Naive thymus-derived CD4-positive, alpha-beta T cell (primary cell): ENCODE measurements at regions of chr11 and their contacts with region 1.

Region 1: GRCh38 chr11:34174412-34175041 is 69.1 kb downstream of the NAT10 start:
- DNase-seq: peak; percentile 60 to 83 (median 73)
- ATAC-seq: peak; percentile 99
- H3K4me3 ChIP-seq: no peak overlapping the region
- H3K4me3 Mint-ChIP-seq: peak overlapping the region; percentile 21 to 81 (median 67)
- H3K27ac ChIP-seq: no peak overlapping the region
- H3K27ac Mint-ChIP-seq: no peak overlapping the region
- H3K4me1 ChIP-seq: peaks cover 0 to 4% of the 10 kb centered on the region in 2 donors
- H3K4me1 Mint-ChIP-seq: peaks cover 0 to 21% (median 4%) of the 10 kb centered on the region in 7 donors
- H3K27me3 ChIP-seq: no peaks in the 10 kb centered on the region
- H3K27me3 Mint-ChIP-seq: peaks cover 0 to 6% (median 0%) of the 10 kb centered on the region in 5 donors

Region 2: GRCh38 chr11:33642461-33643166 is 531.9 kb before region 1 on chr11:
- CTCF ChIA-PET with region 1: no interaction called
- POLR2A ChIA-PET with region 1: no interaction called
- intact Hi-C with region 1: no loop called
- DNase-seq: no peak
- ATAC-seq: no peak
- H3K4me3 ChIP-seq: no peak overlapping the region
- H3K4me3 Mint-ChIP-seq: no peak overlapping the region
- H3K27ac ChIP-seq: no peak overlapping the region
- H3K27ac Mint-ChIP-seq: no peak overlapping the region
- H3K4me1 ChIP-seq: no peaks in the 10 kb centered on the region
- H3K4me1 Mint-ChIP-seq: no peaks in the 10 kb centered on the region
- H3K27me3 ChIP-seq: no peaks in the 10 kb centered on the region
- H3K27me3 Mint-ChIP-seq: peaks cover 4 to 45% (median 20%) of the 10 kb centered on the region in 5 donors

Region 3: GRCh38 chr11:33808228-33808828 is 366.2 kb before region 1 on chr11:
- CTCF ChIA-PET with region 1: no interaction called
- POLR2A ChIA-PET with region 1: no interaction called
- intact Hi-C with region 1: loop called in 1 of 2 experiments (anchors 1 kb)
- DNase-seq: peak; percentile 60 to 85 (median 69)
- ATAC-seq: peak; percentile 94
- H3K4me3 ChIP-seq: no peak overlapping the region
- H3K4me3 Mint-ChIP-seq: no peak overlapping the region
- H3K27ac ChIP-seq: no peak overlapping the region
- H3K27ac Mint-ChIP-seq: no peak overlapping the region
- H3K4me1 ChIP-seq: no peaks in the 10 kb centered on the region
- H3K4me1 Mint-ChIP-seq: peaks cover 0 to 4% (median 0%) of the 10 kb centered on the region in 7 donors
- H3K27me3 ChIP-seq: no peaks in the 10 kb centered on the region
- H3K27me3 Mint-ChIP-seq: peaks cover 9 to 39% (median 13%) of the 10 kb centered on the region in 5 donors

Region 4: DNA sequence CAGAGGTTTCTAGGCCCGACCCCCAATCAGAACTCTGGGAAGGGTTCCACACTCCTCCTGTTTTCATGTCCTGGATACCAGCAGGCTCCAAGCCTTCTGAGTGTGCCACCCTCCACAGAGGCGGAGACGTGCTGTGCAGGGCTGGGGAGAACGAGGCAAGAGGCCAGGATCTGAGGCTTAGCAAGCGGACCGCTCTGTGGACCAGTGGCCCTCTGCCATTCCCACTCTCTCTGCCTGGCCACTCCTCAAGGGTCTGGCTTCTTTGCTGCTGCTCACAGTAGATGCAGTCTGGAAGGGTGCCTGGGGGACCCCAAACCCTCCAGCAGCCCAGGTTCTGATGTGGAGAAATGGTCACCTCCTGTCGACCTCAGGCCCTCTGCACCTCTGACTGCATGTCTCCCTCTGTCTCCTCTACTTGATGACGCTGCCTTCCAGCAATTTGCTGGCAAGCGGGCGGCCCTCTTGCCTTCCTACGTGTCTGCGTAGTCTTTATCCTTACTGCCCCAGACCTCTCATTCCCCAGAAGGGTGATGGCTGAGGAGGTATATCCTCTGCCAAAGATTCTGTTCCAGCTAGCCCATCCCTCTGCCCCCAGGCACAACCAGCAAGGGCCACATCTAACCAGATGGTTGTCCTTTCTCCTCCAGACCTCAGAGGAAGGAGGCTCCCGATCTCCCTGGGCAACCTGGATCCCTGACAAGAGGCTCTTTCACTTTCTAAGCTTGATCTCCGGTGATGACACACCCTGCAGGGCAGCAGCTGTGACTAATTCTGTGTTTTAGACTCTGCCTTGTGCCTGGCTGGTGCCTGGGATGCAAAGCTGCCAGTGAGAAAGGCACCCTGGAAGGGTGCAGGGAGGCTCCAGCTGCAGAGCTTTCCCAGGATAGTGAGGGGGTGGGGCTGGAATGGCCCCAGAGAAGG is 18.2 kb after region 1 on chr11:
- CTCF ChIA-PET with region 1: no interaction called
- POLR2A ChIA-PET with region 1: no interaction called
- intact Hi-C with region 1: no loop called
- DNase-seq: no peak
- ATAC-seq: no peak
- H3K4me3 ChIP-seq: no peak overlapping the region
- H3K4me3 Mint-ChIP-seq: no peak overlapping the region
- H3K27ac ChIP-seq: no peak overlapping the region
- H3K27ac Mint-ChIP-seq: peak overlapping the region in 1 of 9 donors; percentile 35
- H3K4me1 ChIP-seq: no peaks in the 10 kb centered on the region
- H3K4me1 Mint-ChIP-seq: peaks cover 0 to 22% (median 3%) of the 10 kb centered on the region in 7 donors
- H3K27me3 ChIP-seq: no peaks in the 10 kb centered on the region
- H3K27me3 Mint-ChIP-seq: peaks cover 0 to 6% (median 0%) of the 10 kb centered on the region in 5 donors

Region 5: GRCh38 chr11:34204396-34205279 is 30.1 kb after region 1 on chr11:
- CTCF ChIA-PET with region 1: no interaction called
- POLR2A ChIA-PET with region 1: no interaction called
- intact Hi-C with region 1: no loop called
- DNase-seq: no peak
- ATAC-seq: no peak
- H3K4me3 ChIP-seq: no peak overlapping the region
- H3K4me3 Mint-ChIP-seq: no peak overlapping the region
- H3K27ac ChIP-seq: no peak overlapping the region
- H3K27ac Mint-ChIP-seq: no peak overlapping the region
- H3K4me1 ChIP-seq: peaks cover 0 to 8% of the 10 kb centered on the region in 2 donors
- H3K4me1 Mint-ChIP-seq: peaks cover 6 to 41% (median 16%) of the 10 kb centered on the region in 7 donors
- H3K27me3 ChIP-seq: no peaks in the 10 kb centered on the region
- H3K27me3 Mint-ChIP-seq: no peaks in the 10 kb centered on the region

Region 6: GRCh38 chr11:34250732-34251639 is 76.5 kb after region 1 on chr11:
- CTCF ChIA-PET with region 1: interaction called, 13 read pairs
- POLR2A ChIA-PET with region 1: no interaction called
- intact Hi-C with region 1: loop called (anchors 1 to 2 kb)
- DNase-seq: peak; percentile 24 to 79 (median 58)
- ATAC-seq: peak; percentile 94
- H3K4me3 ChIP-seq: peak overlapping the region; percentile 40
- H3K4me3 Mint-ChIP-seq: peak overlapping the region; percentile 35 to 85 (median 78)
- H3K27ac ChIP-seq: no peak overlapping the region
- H3K27ac Mint-ChIP-seq: peak overlapping the region; percentile 12 to 79 (median 55)
- H3K4me1 ChIP-seq: peaks cover 36 to 51% of the 10 kb centered on the region in 2 donors
- H3K4me1 Mint-ChIP-seq: peaks cover 36 to 67% (median 58%) of the 10 kb centered on the region in 7 donors
- H3K27me3 ChIP-seq: no peaks in the 10 kb centered on the region
- H3K27me3 Mint-ChIP-seq: peaks cover 0 to 20% (median 0%) of the 10 kb centered on the region in 5 donors

Region 7: DNA sequence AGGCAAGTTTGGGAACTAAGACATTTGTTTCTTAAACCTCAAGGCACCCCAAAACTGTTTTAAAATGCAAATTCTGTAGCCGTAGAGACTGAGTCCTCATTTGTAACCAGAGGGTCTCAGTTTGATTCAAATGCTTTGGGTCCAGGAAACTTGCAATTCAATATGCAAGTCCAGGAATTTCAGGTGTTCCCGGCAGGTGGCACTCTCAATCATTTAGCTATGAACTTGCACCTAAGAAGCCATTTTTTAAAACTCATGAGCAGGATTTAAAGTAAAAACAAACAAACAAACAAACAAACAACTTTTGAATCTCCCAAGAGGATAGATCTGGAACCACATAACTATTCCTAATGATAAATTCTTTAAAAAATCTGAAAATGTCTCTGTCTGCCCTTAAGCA is 192.0 kb after region 1 on chr11:
- CTCF ChIA-PET with region 1: interaction called, 16 read pairs
- POLR2A ChIA-PET with region 1: interaction called, 4 read pairs
- intact Hi-C with region 1: no loop called
- DNase-seq: no peak
- ATAC-seq: no peak
- H3K4me3 ChIP-seq: no peak overlapping the region
- H3K4me3 Mint-ChIP-seq: no peak overlapping the region
- H3K27ac ChIP-seq: no peak overlapping the region
- H3K27ac Mint-ChIP-seq: no peak overlapping the region
- H3K4me1 ChIP-seq: no peaks in the 10 kb centered on the region
- H3K4me1 Mint-ChIP-seq: peaks cover 3 to 21% (median 14%) of the 10 kb centered on the region in 7 donors
- H3K27me3 ChIP-seq: no peaks in the 10 kb centered on the region
- H3K27me3 Mint-ChIP-seq: peaks cover 0 to 41% (median 10%) of the 10 kb centered on the region in 5 donors

Region 8: GRCh38 chr11:34468209-34468841 is 293.8 kb after region 1 on chr11:
- CTCF ChIA-PET with region 1: interaction called, 4 read pairs
- POLR2A ChIA-PET with region 1: no interaction called
- intact Hi-C with region 1: loop called (anchors 1 to 10 kb)
- DNase-seq: peak in 6 of 9 donors; percentile 9 to 48 (median 32)
- ATAC-seq: peak; percentile 71
- H3K4me3 ChIP-seq: no peak overlapping the region
- H3K4me3 Mint-ChIP-seq: no peak overlapping the region
- H3K27ac ChIP-seq: no peak overlapping the region
- H3K27ac Mint-ChIP-seq: peak overlapping the region in 3 of 9 donors; percentile 1 to 62 (median 46)
- H3K4me1 ChIP-seq: no peaks in the 10 kb centered on the region
- H3K4me1 Mint-ChIP-seq: peaks cover 0 to 11% (median 4%) of the 10 kb centered on the region in 7 donors
- H3K27me3 ChIP-seq: no peaks in the 10 kb centered on the region
- H3K27me3 Mint-ChIP-seq: no peaks in the 10 kb centered on the region

Region 9: GRCh38 chr11:35363854-35364780 is 1189.6 kb after region 1 on chr11:
- CTCF ChIA-PET with region 1: no interaction called
- POLR2A ChIA-PET with region 1: no interaction called
- intact Hi-C with region 1: no loop called
- DNase-seq: no peak
- ATAC-seq: no peak
- H3K4me3 ChIP-seq: no peak overlapping the region
- H3K4me3 Mint-ChIP-seq: no peak overlapping the region
- H3K27ac ChIP-seq: no peak overlapping the region
- H3K27ac Mint-ChIP-seq: peak overlapping the region in 1 of 9 donors; percentile 12
- H3K4me1 ChIP-seq: peaks cover 0 to 3% of the 10 kb centered on the region in 2 donors
- H3K4me1 Mint-ChIP-seq: peaks cover 3 to 16% (median 6%) of the 10 kb centered on the region in 7 donors
- H3K27me3 ChIP-seq: peaks cover 0 to under 1% of the 10 kb centered on the region in 2 donors
- H3K27me3 Mint-ChIP-seq: peaks cover 0 to 31% (median 0%) of the 10 kb centered on the region in 5 donors